Activated CD8-positive, alpha-beta memory T cell treated with anti-CD3 and anti-CD28 coated beads, Interleukin-2, amount 10 ng/mL, durations not matched to agents 7 days and 5 days (primary cell): ENCODE measurements at regions of chr15 and their contacts with region 1.

Region 1: DNA sequence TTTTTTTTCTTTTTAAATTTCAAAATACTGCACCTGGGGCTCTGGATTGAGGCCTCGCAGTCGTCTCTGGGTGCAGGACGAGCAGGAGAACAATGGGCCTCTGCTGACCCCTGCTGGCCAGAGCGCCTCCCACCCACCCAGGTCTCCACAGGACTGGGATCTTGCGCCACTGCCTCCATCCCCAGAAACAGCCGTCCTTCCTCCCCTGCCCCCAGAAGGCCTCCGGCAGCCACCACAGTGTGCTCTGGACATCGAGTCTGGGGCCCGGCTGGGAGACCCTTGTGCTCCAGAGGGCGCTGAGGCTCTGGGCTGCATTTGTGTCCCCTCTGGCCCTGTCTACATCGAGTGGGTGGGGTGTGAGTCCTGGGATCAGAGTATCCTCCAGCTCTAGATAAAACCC is 6.6 kb upstream of the ACSBG1 start:
- DNase-seq: peak; percentile 90
- ATAC-seq: peak; percentile 95
- H3K4me3 Mint-ChIP-seq: no peak overlapping the region
- H3K27ac Mint-ChIP-seq: no peak overlapping the region
- H3K4me1 Mint-ChIP-seq: peaks cover 3% of the 10 kb centered on the region
- H3K27me3 Mint-ChIP-seq: peaks cover 16% of the 10 kb centered on the region

Region 2: GRCh38 chr15:77966540-77967290 is 274.3 kb before region 1 on chr15:
- CTCF ChIA-PET with region 1: interaction called, 21 read pairs
- DNase-seq: peak; percentile 63
- ATAC-seq: peak; percentile 75
- H3K4me3 Mint-ChIP-seq: no peak overlapping the region
- H3K27ac Mint-ChIP-seq: no peak overlapping the region
- H3K4me1 Mint-ChIP-seq: peaks cover 20% of the 10 kb centered on the region
- H3K27me3 Mint-ChIP-seq: peaks cover 25% of the 10 kb centered on the region

Region 3: DNA sequence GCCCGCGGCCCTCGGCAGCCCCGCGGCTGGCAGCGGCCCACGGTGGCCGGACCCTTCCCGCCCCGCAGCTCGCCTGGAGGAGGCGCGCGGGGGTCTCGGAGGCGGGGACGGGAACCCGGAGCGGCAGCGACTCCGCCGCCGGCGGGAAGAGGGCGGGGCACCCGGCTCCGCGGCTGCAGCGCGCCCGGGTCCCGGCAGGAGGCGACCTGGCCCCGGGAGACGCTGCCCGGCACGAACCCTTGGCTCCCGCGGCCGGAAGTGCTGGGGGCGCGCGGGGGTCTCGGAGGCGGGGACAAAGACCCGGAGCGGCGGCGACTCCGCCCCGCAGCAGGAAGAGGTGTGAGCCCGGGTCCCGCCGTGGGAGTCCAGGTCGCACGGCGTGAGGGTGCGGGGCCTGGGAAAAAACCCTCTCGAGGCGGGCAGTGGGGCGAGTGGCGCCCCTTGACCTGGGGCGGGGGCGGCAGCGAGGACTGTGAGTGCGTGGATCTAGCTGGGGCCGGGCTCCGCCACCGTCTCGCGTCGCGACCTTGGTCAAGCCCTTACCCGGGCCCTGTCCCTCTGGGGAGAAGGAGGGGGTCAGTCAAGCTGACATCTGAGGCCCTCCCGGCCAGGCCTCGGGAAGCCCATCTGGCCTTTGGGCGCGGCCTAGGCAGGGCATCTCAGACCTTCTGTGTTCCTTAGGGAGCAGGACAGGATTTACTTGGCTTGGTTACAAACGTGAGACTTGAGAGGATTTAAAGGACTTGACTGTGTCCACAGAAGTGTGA is 109.5 kb before region 1 on chr15 and contains the start of gene CIB2:
- CTCF ChIA-PET with region 1: interaction called, 36 read pairs
- DNase-seq: peak; percentile 82
- ATAC-seq: peak; percentile 93
- H3K4me3 Mint-ChIP-seq: peak within 1 kb of the TSS; percentile 77
- H3K27ac Mint-ChIP-seq: peak within 1 kb of the TSS; percentile 74
- H3K4me1 Mint-ChIP-seq: peaks cover 16% of the 10 kb centered on the region
- H3K27me3 Mint-ChIP-seq: no peaks in the 10 kb centered on the region
- total RNA-seq, gene CIB2: 0.94 to 1.2 TPM

Region 4: GRCh38 chr15:78177447-78177873 is 63.5 kb before region 1 on chr15:
- CTCF ChIA-PET with region 1: interaction called, 18 read pairs
- DNase-seq: peak; percentile 68
- ATAC-seq: peak; percentile 62
- H3K4me3 Mint-ChIP-seq: no peak overlapping the region
- H3K27ac Mint-ChIP-seq: no peak overlapping the region
- H3K4me1 Mint-ChIP-seq: peaks cover 23% of the 10 kb centered on the region
- H3K27me3 Mint-ChIP-seq: no peaks in the 10 kb centered on the region

Region 5: GRCh38 chr15:78225783-78226541 is 15.0 kb before region 1 on chr15:
- CTCF ChIA-PET with region 1: interaction called, 42 read pairs
- DNase-seq: peak; percentile 46
- ATAC-seq: peak; percentile 92
- H3K4me3 Mint-ChIP-seq: peak overlapping the region; percentile 59
- H3K27ac Mint-ChIP-seq: peak overlapping the region; percentile 50
- H3K4me1 Mint-ChIP-seq: peaks cover 27% of the 10 kb centered on the region
- H3K27me3 Mint-ChIP-seq: peaks cover 5% of the 10 kb centered on the region

Region 6: GRCh38 chr15:78360426-78360825 is 119.4 kb after region 1 on chr15:
- CTCF ChIA-PET with region 1: no interaction called
- DNase-seq: no peak
- ATAC-seq: no peak
- H3K4me3 Mint-ChIP-seq: no peak overlapping the region
- H3K27ac Mint-ChIP-seq: no peak overlapping the region
- H3K4me1 Mint-ChIP-seq: no peaks in the 10 kb centered on the region
- H3K27me3 Mint-ChIP-seq: peaks cover 38% of the 10 kb centered on the region